PC-9 (cell line): ENCODE measurements at regions of chr5 and their contacts with region 1.

Region 1: GRCh38 chr5:146233441-146233840 is 30.0 kb downstream of the RBM27 start:
- DNase-seq: no peak
- H3K4me3 ChIP-seq: no peak overlapping the region
- H3K27ac ChIP-seq: no peak overlapping the region
- H3K4me1 ChIP-seq: no peaks in the 10 kb centered on the region
- H3K27me3 ChIP-seq: no peaks in the 10 kb centered on the region
- CTCF ChIP-seq: no peak

Region 2: DNA sequence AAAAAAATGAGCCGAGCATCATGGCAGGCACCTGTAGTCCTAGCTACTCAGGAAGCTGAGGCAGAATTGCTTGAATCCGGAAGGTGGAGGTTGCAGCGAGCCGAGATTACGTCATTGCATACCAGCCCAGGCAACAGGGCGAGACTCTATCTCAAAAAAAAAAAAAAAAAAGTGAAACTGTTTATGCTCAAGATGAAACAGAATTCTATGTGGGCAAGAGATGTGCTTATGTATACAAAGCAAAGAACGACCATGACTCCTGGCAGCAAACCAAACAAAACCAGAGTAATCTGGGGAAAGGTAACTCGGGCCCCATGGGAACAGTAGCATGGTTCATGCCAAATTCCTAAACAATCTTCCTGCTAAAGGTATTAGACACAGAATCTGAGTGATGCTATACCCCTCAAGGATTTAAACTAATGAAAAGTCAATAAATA is 95.5 kb before region 1 on chr5:
- CTCF ChIA-PET with region 1: no interaction called
- POLR2A ChIA-PET with region 1: no interaction called
- intact Hi-C with region 1: loop called (anchors 5 kb)
- DNase-seq: peak; percentile 78 to 88
- H3K4me3 ChIP-seq: no peak overlapping the region
- H3K27ac ChIP-seq: peak overlapping the region; percentile 80
- H3K4me1 ChIP-seq: peaks cover 23% of the 10 kb centered on the region
- H3K27me3 ChIP-seq: no peaks in the 10 kb centered on the region
- CTCF ChIP-seq: no peak

Region 3: GRCh38 chr5:146173597-146173996 is 59.8 kb before region 1 on chr5:
- CTCF ChIA-PET with region 1: no interaction called
- POLR2A ChIA-PET with region 1: no interaction called
- intact Hi-C with region 1: loop called (anchors 5 kb)
- DNase-seq: no peak
- H3K4me3 ChIP-seq: no peak overlapping the region
- H3K27ac ChIP-seq: no peak overlapping the region
- H3K4me1 ChIP-seq: no peaks in the 10 kb centered on the region
- H3K27me3 ChIP-seq: no peaks in the 10 kb centered on the region
- CTCF ChIP-seq: no peak